ENCODE measurements at regions of chr17 and their contacts with region 1.

Region 1: DNA sequence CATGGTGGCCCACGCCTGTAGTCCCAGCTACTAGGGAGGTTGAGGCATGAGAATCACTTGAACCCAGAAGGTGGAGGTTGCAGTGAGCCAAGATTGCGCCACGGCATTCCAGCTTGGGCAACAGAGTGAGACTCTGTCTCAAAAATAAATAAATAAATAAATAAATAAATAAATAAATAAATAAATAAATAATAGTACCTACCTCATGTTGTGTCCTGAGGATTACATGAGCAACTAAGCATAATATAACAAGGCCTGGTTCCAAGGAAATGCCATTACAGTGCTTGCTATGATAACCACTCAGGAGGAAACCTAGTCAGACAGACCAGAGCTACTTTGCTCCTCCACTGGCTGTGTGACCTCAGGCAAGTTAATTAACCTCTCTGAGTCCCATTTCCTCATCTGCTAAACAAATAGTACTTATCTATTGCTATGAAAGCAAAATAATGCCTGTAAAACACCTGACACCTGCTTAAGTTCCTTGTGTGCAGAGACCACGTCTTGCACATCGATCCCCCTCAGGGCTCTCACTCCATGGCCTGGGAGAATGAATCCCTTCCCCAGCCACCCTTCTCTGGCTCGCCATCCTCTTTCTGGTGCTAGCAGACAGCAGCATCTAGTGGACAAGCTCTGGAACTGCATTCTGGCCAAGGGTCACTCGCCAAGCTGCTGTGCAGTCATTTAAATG is 7.5 kb downstream of the EPOP start:
- DNase-seq: peak; percentile 72
- H3K4me3 ChIP-seq: no peak overlapping the region
- H3K27ac ChIP-seq: no peak overlapping the region
- H3K4me1 ChIP-seq: no peaks in the 10 kb centered on the region
- H3K27me3 ChIP-seq: peaks cover 38% of the 10 kb centered on the region in 2 experiments
- CTCF ChIP-seq: peak; percentile 98 to 99
- POLR2A ChIP-seq: no peak

Region 2: DNA sequence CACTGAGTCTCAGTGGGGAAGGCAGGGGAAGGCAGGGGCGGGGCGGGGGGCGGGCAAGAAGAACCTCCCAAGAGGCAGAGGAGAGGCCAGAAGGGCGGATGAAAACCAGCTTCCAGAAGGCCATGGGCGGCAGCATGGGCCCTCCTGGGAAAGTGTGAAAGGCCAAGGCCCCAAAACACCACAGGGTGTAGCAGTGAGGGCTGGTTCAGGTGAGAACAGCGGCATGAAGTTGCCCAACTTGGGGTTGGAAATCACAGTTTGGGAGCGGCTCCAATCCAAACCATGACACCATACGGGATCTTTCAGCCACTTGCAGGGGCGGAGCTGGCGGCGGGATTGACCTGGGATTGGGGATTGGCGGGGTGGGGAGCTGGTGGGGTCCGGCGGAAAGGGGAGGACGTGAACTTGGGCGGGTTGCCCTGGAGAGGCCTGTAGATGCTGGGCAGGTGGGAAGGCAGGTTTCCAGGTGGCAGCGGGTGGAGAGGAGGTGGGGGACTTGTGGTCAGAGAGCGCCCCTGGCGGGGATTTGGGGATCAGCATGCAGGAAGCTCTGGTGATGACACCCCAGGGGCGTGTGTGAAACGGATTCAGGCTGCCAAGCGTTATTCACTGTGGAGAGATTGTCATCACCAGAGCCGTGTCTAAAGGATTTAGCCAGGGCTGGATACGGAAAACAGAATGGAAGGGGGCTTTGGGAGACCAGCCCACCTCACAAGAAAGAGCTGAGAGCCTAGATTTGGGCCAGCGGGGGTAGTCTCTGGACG is 158.1 kb before region 1 on chr17:
- CTCF ChIA-PET with region 1: interaction called, 61 read pairs
- POLR2A ChIA-PET with region 1: no interaction called
- dilution Hi-C with region 1: no loop called
- intact Hi-C with region 1: loop called (anchors 1 kb)
- DNase-seq: peak; percentile 76
- H3K4me3 ChIP-seq: peak overlapping the region in 2 of 3 experiments; percentile 12 to 13
- H3K27ac ChIP-seq: peak overlapping the region; percentile 10
- H3K4me1 ChIP-seq: peaks cover 13% of the 10 kb centered on the region
- H3K27me3 ChIP-seq: no peaks in the 10 kb centered on the region
- CTCF ChIP-seq: peak; percentile 93 to 95
- POLR2A ChIP-seq: peak; percentile 76

Region 3: GRCh38 chr17:38584350-38584925 is 82.8 kb before region 1 on chr17:
- CTCF ChIA-PET with region 1: interaction called, 11 read pairs
- POLR2A ChIA-PET with region 1: no interaction called
- dilution Hi-C with region 1: no loop called
- intact Hi-C with region 1: no loop called
- DNase-seq: peak; percentile 28
- H3K4me3 ChIP-seq: no peak overlapping the region
- H3K27ac ChIP-seq: no peak overlapping the region
- H3K4me1 ChIP-seq: no peaks in the 10 kb centered on the region
- H3K27me3 ChIP-seq: peaks cover 24 to 26% of the 10 kb centered on the region in 2 experiments
- CTCF ChIP-seq: peak; percentile 93 to 98
- POLR2A ChIP-seq: no peak

Region 4: DNA sequence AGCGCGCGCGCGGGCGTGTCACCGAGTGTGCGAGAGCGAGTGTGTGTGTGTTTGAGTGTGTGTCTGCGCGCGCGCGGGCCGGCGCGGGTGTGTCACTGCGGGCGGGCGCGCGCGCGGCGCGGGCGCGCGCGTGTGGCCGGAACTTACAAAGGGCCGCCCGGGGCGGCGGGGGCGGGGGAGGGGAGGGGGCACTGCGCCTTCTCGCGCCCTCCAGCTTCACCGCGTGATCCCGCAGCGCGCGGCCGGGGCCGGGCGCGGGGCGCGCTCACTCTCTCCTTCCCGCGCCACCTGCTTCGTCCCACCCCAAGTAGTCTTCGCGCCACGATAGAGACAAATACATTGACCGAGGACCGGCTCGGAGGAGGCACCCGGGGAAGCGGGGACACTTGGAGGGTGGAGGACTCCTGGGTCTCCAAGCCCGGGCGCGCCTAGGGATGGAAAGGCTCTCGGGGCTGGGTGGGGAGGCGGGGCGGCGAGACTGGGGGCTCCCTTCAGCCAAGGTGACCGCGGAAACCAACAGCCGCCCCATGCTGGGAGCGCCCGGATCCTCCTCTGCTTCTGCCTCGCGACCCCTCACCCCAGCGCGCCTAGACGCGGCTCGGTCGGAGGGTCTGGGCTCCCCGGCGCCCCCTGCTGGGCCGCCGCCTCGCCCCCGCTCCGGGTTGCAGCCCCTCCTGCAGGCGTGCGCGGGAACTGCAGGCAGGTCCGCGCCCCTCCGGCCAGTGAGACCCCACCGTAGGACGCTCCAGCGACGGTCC is 61.2 kb before region 1 on chr17 and contains the start of gene SRCIN1:
- CTCF ChIA-PET with region 1: interaction called, 6 read pairs
- POLR2A ChIA-PET with region 1: no interaction called
- dilution Hi-C with region 1: no loop called
- intact Hi-C with region 1: loop called (anchors 5 kb)
- DNase-seq: no peak
- H3K4me3 ChIP-seq: peak within 1 kb of the TSS in 2 of 3 experiments; percentile 41 to 58
- H3K27ac ChIP-seq: no peak within 1 kb of the TSS
- H3K4me1 ChIP-seq: no peaks in the 10 kb centered on the region
- H3K27me3 ChIP-seq: peaks cover 28 to 36% of the 10 kb centered on the region in 2 experiments
- CTCF ChIP-seq: peak; percentile 96 to 99
- POLR2A ChIP-seq: no peak
- total RNA-seq, gene SRCIN1: 0.12 and 0.35 TPM in 2 replicates

Region 5: DNA sequence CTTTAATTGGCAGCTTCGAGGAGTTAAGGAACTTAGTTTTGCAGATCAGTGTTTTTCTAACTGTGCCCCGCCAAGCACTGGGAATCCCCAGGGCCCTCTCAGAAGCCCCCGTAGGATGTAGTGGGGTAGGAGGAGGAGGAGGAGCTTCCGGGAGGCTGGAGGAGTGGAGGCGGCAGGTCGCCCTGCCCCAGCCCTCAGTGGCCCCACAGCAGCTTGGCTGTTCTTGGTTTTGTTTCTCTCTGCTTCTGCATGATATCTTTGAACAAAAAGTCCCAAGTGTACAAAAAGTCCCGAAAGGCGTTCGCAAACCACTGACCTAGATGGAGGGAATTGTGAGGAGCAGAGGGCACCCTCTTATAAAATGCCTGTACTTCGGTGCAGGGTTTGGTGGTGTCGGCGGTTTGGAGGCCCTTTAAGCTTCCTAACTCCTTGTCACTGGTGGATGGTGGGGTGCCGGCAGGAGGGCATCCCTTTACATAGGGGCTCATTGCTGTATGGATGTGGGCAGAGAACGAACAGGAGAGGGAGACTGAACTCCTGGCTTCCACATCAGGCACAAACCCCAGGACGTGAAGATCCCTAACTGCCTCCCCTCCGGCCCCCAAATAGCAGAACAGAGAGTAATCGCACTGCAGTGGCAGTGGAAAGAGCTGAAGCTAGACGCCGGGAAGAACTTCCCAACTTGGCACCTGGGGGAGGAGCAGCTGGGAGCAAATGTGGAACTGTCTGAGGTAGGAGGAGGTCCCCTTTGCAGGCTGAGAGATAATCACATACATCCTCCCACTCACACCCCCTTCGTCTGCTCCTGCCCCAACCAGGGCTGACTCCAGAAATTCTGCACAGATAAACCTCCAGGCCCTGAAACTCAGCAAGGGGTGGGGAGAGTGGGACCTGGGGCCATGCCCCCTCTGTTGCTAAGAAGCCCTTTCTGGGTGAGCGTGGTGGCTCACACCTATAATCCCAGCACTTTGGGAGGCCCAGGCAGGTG is 12.5 kb before region 1 on chr17:
- CTCF ChIA-PET with region 1: interaction called, 41 read pairs
- POLR2A ChIA-PET with region 1: no interaction called
- dilution Hi-C with region 1: no loop called
- intact Hi-C with region 1: no loop called
- DNase-seq: no peak
- H3K4me3 ChIP-seq: no peak overlapping the region
- H3K27ac ChIP-seq: no peak overlapping the region
- H3K4me1 ChIP-seq: no peaks in the 10 kb centered on the region
- H3K27me3 ChIP-seq: peaks cover 7 to 8% of the 10 kb centered on the region in 2 experiments
- CTCF ChIP-seq: no peak
- POLR2A ChIP-seq: no peak

Region 6: GRCh38 chr17:38697061-38697820 is 30.0 kb after region 1 on chr17:
- CTCF ChIA-PET with region 1: no interaction called
- POLR2A ChIA-PET with region 1: no interaction called
- dilution Hi-C with region 1: no loop called
- intact Hi-C with region 1: no loop called
- DNase-seq: no peak
- H3K4me3 ChIP-seq: no peak overlapping the region
- H3K27ac ChIP-seq: no peak overlapping the region
- H3K4me1 ChIP-seq: peaks cover 9% of the 10 kb centered on the region
- H3K27me3 ChIP-seq: peaks cover 0 to 2% of the 10 kb centered on the region in 2 experiments
- CTCF ChIP-seq: no peak
- POLR2A ChIP-seq: no peak